ENCODE measurements at regions of chr12 and their contacts with region 1.

Region 1: DNA sequence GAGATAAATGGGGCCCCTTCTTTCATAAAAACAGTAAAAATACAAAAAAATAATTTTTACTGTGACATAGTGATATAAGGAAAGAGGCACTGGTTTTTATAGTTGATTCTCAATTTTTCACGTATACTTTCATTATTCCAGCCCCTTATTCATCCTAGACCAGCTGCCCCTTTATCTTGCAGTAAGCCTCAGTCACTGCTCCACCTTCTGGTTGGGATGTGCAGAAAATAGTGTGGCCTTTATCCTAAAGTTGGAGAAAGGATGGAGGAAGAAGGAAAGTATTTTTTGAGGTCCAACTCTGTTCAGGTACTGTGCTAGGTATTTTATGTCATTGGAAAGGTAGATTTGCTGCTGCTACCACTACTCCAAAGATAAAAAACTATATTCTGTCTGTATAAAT is 172.7 kb downstream of the ANO6 start:
- DNase-seq: peak in 1 of 9 donors; percentile 1
- ATAC-seq: no peak
- H3K4me3 ChIP-seq: no peak overlapping the region
- H3K4me3 Mint-ChIP-seq: no peak overlapping the region
- H3K27ac ChIP-seq: no peak overlapping the region
- H3K27ac Mint-ChIP-seq: no peak overlapping the region
- H3K4me1 ChIP-seq: no peaks in the 10 kb centered on the region
- H3K4me1 Mint-ChIP-seq: no peaks in the 10 kb centered on the region
- H3K27me3 ChIP-seq: no peaks in the 10 kb centered on the region
- H3K27me3 Mint-ChIP-seq: no peaks in the 10 kb centered on the region

Region 2: DNA sequence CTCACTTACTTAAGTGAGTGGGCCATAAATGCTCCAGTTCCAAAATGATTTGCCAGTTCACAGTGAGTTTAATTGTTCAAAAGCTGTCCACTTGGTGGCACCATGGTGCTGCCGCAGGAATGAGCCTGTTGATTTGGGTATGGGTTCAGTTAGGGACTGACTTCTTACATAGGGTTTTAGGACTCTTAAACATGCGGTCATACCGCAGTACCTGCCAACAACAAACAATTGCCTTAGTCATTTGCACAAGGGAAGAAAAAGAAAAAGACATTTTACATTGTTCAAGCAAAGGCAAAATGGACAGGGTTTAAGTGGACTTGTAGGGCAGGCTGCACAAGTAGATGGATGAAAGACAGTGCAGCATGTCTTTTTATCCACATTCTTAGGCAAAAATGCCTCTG is 257.7 kb before region 1 on chr12:
- CTCF ChIA-PET with region 1: no interaction called
- POLR2A ChIA-PET with region 1: no interaction called
- intact Hi-C with region 1: loop called in 1 of 2 experiments (anchors 1 kb)
- DNase-seq: peak in 6 of 9 donors; percentile 7 to 33 (median 14)
- ATAC-seq: peak; percentile 46
- H3K4me3 ChIP-seq: no peak overlapping the region
- H3K4me3 Mint-ChIP-seq: no peak overlapping the region
- H3K27ac ChIP-seq: no peak overlapping the region
- H3K27ac Mint-ChIP-seq: no peak overlapping the region
- H3K4me1 ChIP-seq: no peaks in the 10 kb centered on the region
- H3K4me1 Mint-ChIP-seq: no peaks in the 10 kb centered on the region
- H3K27me3 ChIP-seq: no peaks in the 10 kb centered on the region
- H3K27me3 Mint-ChIP-seq: peaks cover 6 to 33% (median 18%) of the 10 kb centered on the region in 5 donors

Region 3: DNA sequence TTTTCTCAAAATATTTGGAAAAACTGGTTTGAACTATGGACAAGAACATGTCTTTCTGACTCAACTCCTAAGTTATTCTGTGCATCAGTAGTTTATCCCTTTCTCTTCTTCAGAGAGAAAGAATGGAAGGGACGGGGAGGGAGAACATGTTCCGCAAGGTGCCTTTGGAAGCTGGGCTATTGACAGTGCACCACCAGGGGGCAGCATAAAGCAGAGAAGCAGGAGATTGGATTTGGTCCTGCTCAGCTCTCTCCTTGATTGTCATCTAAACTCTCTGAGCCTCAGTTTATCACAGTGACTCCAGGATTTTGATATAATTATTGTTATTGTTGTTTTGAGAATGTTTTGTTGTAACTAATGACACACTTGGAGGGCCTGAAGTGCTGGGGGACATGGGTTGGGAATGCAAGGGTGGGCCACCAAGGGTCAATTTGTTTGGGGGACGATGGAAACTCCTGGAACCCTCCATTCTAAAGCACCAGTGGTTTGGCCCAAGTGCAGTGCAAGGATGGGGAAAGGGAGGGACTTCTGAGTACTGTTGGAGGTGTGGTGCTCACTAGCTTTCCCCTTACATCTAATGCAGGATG is 218.0 kb before region 1 on chr12:
- CTCF ChIA-PET with region 1: no interaction called
- POLR2A ChIA-PET with region 1: no interaction called
- intact Hi-C with region 1: loop called (anchors 1 to 2 kb)
- DNase-seq: peak; percentile 42 to 77 (median 63)
- ATAC-seq: peak; percentile 76
- H3K4me3 ChIP-seq: no peak overlapping the region
- H3K4me3 Mint-ChIP-seq: no peak overlapping the region
- H3K27ac ChIP-seq: no peak overlapping the region
- H3K27ac Mint-ChIP-seq: peak overlapping the region in 1 of 9 donors; percentile 4
- H3K4me1 ChIP-seq: no peaks in the 10 kb centered on the region
- H3K4me1 Mint-ChIP-seq: peaks cover 0 to 4% (median 0%) of the 10 kb centered on the region in 7 donors
- H3K27me3 ChIP-seq: no peaks in the 10 kb centered on the region
- H3K27me3 Mint-ChIP-seq: peaks cover 0 to 7% (median 4%) of the 10 kb centered on the region in 5 donors

Region 4: DNA sequence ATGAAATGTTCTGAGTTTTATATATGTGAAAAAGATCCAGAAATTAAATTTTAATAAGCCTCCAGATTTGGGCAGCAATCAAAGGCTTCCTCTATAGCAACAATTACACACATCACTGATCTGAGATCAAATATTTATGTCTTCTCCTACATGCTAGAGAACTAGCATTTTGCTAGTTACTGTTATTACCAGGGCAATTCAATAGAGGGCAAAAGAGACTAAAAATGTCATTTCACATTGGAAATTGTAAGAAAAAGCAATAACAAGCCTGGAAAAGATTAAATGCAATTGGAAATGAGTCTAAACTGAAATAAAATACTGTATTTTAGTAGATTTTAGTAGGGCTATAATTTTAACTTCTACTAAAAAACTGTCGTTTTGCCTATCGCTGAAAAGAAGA is 205.3 kb before region 1 on chr12:
- CTCF ChIA-PET with region 1: interaction called, 9 read pairs
- POLR2A ChIA-PET with region 1: no interaction called
- intact Hi-C with region 1: loop called in 1 of 2 experiments (anchors 1 kb)
- DNase-seq: peak in 2 of 9 donors; percentile 9 to 10
- ATAC-seq: no peak
- H3K4me3 ChIP-seq: no peak overlapping the region
- H3K4me3 Mint-ChIP-seq: no peak overlapping the region
- H3K27ac ChIP-seq: no peak overlapping the region
- H3K27ac Mint-ChIP-seq: no peak overlapping the region
- H3K4me1 ChIP-seq: no peaks in the 10 kb centered on the region
- H3K4me1 Mint-ChIP-seq: peaks cover 0 to under 1% (median 0%) of the 10 kb centered on the region in 7 donors
- H3K27me3 ChIP-seq: no peaks in the 10 kb centered on the region
- H3K27me3 Mint-ChIP-seq: no peaks in the 10 kb centered on the region